A673 (cell line): ENCODE measurements at regions of chr11 and their contacts with region 1.

Region 1: GRCh38 chr11:107563702-107564101 is 1.8 kb downstream of the ALKBH8 start:
- DNase-seq: peak; percentile 81
- H3K4me3 ChIP-seq: peak overlapping the region; percentile 6
- H3K27ac ChIP-seq: no peak overlapping the region
- H3K4me1 ChIP-seq: peaks cover 12% of the 10 kb centered on the region
- H3K27me3 ChIP-seq: no peaks in the 10 kb centered on the region
- CTCF ChIP-seq: peak; percentile 75

Region 2: GRCh38 chr11:107689317-107690202 is 125.9 kb after region 1 on chr11:
- CTCF ChIA-PET with region 1: interaction called, 5 read pairs
- POLR2A ChIA-PET with region 1: no interaction called
- intact Hi-C with region 1: loop called (anchors 1 kb)
- DNase-seq: peak; percentile 83
- H3K4me3 ChIP-seq: no peak overlapping the region
- H3K27ac ChIP-seq: no peak overlapping the region
- H3K4me1 ChIP-seq: no peaks in the 10 kb centered on the region
- H3K27me3 ChIP-seq: no peaks in the 10 kb centered on the region
- CTCF ChIP-seq: peak; percentile 79

Region 3: DNA sequence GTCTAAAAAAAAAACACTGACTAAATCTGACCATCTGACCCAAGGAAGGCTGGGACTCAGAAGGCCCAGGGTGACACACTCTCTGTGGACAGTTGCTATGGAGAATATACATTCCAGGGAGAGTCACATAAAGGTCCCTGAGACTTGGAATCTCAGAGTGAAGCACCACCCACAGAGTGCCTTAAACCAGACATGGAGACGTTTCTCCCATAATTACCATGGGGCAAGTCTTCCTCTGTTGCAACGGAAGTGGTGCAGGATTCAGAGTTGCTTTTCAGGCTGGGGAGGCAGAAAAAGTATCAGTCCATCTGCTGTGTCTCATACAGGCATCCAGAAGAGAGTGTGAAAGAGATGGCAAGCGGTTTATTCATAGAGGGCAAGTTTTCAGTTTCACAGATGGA is 206.8 kb after region 1 on chr11:
- CTCF ChIA-PET with region 1: interaction called, 3 read pairs
- POLR2A ChIA-PET with region 1: no interaction called
- intact Hi-C with region 1: loop called (anchors 5 kb)
- DNase-seq: peak; percentile 16
- H3K4me3 ChIP-seq: no peak overlapping the region
- H3K27ac ChIP-seq: no peak overlapping the region
- H3K4me1 ChIP-seq: no peaks in the 10 kb centered on the region
- H3K27me3 ChIP-seq: no peaks in the 10 kb centered on the region
- CTCF ChIP-seq: no peak

Region 4: DNA sequence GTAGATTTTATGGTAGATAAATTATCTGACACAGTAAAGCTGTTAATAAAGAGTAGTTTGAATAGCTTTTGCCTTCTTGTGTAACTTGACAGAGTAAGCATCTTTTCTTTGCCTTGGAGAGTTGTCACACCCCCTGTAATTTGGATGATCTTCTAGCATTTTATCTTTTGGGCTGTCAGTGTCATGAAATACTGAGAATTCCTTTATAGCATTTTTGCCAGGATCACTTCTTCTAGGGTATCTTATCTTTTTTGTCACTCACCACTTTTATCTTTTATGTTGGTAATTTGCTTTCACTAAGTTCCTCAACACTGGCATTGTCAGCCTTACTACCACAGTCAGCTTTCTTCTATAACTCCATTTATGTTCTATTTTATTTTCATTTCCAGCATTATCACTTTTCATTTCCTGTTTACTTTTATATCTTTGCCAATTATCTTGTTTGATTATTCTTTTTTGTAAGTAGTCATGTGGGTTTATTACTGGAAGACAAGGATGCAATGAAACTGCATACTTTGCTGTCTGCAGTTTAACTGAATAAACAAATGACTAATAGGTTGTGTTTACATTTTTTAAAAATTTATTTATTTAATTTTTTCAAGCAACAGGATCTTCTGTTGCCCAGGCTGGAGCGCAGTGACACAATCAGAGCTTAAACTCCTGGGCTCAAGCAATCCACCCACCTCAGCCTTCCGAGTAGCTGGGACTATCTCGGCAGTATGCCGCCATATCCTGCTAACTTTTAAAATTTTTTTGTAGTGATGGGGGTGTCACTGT is 529.6 kb after region 1 on chr11:
- CTCF ChIA-PET with region 1: no interaction called
- POLR2A ChIA-PET with region 1: no interaction called
- intact Hi-C with region 1: no loop called
- DNase-seq: no peak
- H3K4me3 ChIP-seq: no peak overlapping the region
- H3K27ac ChIP-seq: no peak overlapping the region
- H3K4me1 ChIP-seq: no peaks in the 10 kb centered on the region
- H3K27me3 ChIP-seq: no peaks in the 10 kb centered on the region
- CTCF ChIP-seq: no peak